Ascending aorta (tissue), 2 donors: ENCODE measurements at regions of chr17 and their contacts with region 1.

Region 1: DNA sequence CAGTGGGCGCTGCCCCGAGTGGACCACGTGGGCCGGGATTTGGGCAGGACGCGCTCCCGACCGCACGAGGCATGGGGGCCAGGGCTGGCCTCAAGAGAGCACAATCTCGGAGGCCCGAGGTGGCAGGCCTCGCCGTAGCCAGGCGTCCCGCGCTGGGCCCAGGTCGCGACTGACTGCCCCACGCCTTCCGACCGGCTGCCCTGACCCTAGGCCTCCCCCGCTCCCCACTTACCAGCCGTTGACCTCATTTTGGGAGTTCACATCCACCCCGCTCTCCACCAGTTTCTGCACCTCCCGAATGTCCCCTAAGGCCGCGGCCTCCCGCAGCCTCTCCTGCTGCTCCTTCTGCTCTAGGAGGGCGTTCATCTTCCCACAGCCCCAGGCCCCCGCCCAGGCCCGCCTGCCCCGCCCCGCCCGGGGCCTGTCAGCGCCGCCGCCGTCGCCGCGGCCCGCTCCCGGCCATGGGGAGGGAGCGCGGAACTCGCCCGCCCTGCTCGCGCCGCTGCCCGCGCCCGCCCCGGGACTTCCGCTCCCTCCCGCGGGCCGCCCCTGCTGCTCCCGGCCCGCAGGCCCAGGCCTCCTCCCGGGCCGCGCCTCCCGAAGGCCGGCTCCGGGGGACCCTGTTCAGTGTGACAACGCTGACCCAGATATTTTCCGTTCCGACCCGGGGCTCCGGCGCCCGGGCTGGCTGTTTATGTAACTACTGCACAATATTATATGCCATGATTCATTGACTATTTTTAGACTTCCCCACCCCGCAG is at the start of gene ANKRD40:
- DNase-seq: peak; percentile 73 to 97
- H3K4me3 ChIP-seq: peak within 1 kb of the TSS; percentile 69 to 74
- H3K27ac ChIP-seq: peak within 1 kb of the TSS; percentile 88 to 91
- H3K4me1 ChIP-seq: peaks cover 11 to 37% of the 10 kb centered on the region in 2 donors
- H3K27me3 ChIP-seq: no peaks in the 10 kb centered on the region
- CTCF ChIP-seq: no peak
- total RNA-seq, gene ANKRD40: 35.4 TPM

Region 2: DNA sequence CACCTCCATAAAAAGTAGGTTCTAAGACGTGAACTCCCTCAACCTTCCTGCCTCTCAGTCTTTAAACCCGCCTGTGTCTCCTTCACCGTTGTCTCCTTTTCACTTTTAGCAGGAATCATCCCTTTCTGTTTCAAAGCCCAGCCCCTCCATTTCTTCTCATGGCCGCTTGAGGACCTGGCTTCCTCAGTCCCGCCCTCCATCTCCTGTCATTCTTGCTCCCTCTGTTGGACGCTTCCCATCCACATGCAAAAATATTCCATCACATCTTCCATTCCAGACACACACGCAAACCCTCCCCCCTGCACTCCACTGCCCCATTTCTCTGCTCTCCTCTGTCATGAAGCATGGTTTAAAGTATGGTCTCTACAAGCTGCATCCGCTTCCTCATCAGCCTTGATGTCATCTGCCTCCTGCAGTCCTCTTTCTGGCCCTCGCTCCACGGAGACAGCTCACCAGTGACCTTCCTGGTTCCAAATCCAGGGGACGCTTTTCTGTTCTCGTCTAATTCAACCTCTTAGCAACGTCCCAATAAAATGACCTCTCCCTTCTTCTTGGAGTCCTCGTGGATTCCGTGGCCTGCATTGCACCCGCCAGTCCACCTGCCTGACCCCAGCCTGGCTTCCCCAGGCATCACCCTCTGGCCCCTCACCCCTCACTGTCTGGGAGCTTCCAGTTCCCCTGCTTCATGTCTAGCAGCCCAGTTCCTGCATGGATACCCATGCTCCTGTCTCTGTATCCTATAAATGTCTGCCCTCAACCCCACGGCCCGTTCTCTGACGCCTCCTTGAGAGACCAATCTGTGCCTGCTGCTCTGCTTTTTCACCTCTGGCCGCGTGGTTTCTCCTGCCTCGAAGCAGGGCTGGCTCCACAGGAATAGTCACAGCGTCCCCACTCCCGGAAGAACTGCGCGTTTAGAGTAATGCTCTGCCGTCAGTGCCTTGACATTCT is 25.9 kb before region 1 on chr17:
- intact Hi-C with region 1: no loop called
- DNase-seq: no peak
- H3K4me3 ChIP-seq: no peak overlapping the region
- H3K27ac ChIP-seq: no peak overlapping the region
- H3K4me1 ChIP-seq: peaks cover 5 to 7% of the 10 kb centered on the region in 2 donors
- H3K27me3 ChIP-seq: no peaks in the 10 kb centered on the region
- CTCF ChIP-seq: peak; percentile 34 to 55 (median 54)

Region 3: GRCh38 chr17:50719144-50719923 is 11.9 kb after region 1 on chr17 and contains the start of gene LUC7L3:
- intact Hi-C with region 1: loop called (anchors 1 kb)
- DNase-seq: peak; percentile 81 to 96
- H3K4me3 ChIP-seq: peak within 1 kb of the TSS; percentile 77 to 95
- H3K27ac ChIP-seq: peak within 1 kb of the TSS; percentile 91 to 97
- H3K4me1 ChIP-seq: peaks cover 15 to 23% of the 10 kb centered on the region in 2 donors
- H3K27me3 ChIP-seq: no peaks in the 10 kb centered on the region
- CTCF ChIP-seq: no peak
- total RNA-seq, gene LUC7L3: 32.0 TPM

Region 4: GRCh38 chr17:50731575-50732460 is 24.3 kb after region 1 on chr17:
- intact Hi-C with region 1: loop called (anchors 1 kb)
- DNase-seq: no peak
- H3K4me3 ChIP-seq: no peak overlapping the region
- H3K27ac ChIP-seq: no peak overlapping the region
- H3K4me1 ChIP-seq: peaks cover 0 to 50% of the 10 kb centered on the region in 2 donors
- H3K27me3 ChIP-seq: no peaks in the 10 kb centered on the region
- CTCF ChIP-seq: no peak

Region 5: GRCh38 chr17:51064061-51064735 is 356.7 kb after region 1 on chr17:
- intact Hi-C with region 1: no loop called
- DNase-seq: no peak
- H3K4me3 ChIP-seq: no peak overlapping the region
- H3K27ac ChIP-seq: no peak overlapping the region
- H3K4me1 ChIP-seq: no peaks in the 10 kb centered on the region
- H3K27me3 ChIP-seq: no peaks in the 10 kb centered on the region
- CTCF ChIP-seq: no peak